Right ventricle myocardium inferior (tissue), 1 donor: ENCODE measurements at regions of chr1 and their contacts with region 1.

Region 1: DNA sequence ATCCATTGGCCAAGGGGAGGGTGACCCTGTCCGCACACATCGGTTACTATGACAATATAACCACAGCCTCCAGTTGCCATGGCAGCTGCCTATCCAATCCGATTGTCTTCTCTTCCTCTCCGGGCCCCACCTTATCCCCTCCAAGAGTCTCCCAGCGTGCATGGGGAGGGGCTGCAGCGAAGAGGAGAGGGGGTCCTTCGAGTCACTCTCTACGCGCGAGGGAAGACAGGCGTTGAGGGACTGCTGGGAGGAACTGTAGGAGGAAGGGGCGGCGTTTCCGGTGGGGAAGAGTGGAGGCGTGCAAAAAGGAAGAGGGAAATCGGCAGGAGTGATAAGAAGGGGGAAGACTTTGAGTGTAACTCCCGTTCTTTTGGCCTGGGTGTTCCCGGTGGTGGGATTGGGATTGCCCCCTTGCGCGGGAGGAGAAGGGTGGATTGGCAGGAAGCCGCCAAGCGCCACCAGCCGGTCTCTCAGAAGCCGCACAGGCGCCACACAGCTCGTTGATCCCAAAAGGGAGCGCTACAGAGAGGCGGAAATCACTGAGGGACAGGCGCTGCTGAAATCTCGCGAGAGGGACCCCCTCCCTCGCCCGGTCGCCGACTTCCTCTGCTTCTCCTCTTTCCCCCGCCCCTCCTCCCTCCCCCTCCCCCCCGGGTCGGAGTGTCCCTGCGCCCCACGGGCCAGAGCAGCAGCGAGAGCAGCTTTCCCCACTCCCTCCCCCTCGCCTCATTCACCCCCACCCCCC is 384 bp upstream of the SMG7 start:
- DNase-seq: peak; percentile 98
- ATAC-seq: peak; percentile 89

Region 2: DNA sequence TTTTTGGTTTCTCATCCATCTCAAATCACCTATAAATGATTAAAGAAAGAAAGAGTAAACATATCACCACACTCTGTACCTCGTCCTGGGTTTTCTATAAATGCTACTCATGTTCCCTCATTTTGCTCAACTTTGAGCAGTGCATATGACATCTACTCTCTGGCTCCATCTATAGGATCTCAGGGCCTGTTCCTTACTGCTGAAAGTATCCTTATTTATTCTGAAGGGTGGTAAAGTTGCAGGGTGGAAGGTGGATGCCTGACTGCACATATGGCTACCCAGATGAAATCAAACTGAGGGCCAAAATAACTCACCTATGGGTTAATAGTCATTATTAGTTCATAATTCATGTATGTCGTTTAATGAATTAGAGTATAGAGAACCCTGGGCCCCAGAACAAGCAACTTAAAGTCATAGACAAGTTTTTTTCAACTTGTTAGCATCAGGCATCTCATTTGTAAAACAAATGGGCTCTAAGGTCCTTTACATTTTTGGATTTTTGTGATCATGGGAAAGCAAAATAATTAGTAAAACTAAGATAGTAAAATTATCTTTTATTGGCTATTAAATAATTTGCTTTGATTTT is 71.8 kb after region 1 on chr1:
- intact Hi-C with region 1: loop called (anchors 2 kb)
- DNase-seq: no peak
- ATAC-seq: peak; percentile 84

Region 3: GRCh38 chr1:183622884-183623785 is 151.2 kb after region 1 on chr1:
- intact Hi-C with region 1: loop called (anchors 5 kb)
- DNase-seq: peak; percentile 61
- ATAC-seq: peak; percentile 88

Region 4: GRCh38 chr1:183635606-183636333 is 163.9 kb after region 1 on chr1 and contains the start of gene ARPC5:
- intact Hi-C with region 1: loop called (anchors 1 kb)
- DNase-seq: peak; percentile 99
- ATAC-seq: peak; percentile 98
- total RNA-seq, gene ARPC5: 40.2 TPM

Region 5: GRCh38 chr1:183901748-183902330 is 429.9 kb after region 1 on chr1:
- intact Hi-C with region 1: loop called (anchors 10 kb)
- DNase-seq: no peak
- ATAC-seq: no peak